ENCODE measurements at regions of chr11 and their contacts with region 1.

Region 1: GRCh38 chr11:71251761-71252443 is 475 bp downstream of the SHANK2 start:
- DNase-seq: peak; percentile 79
- H3K4me3 Mint-ChIP-seq: peak overlapping the region; percentile 87
- H3K27ac Mint-ChIP-seq: peak overlapping the region; percentile 67
- H3K4me1 Mint-ChIP-seq: peaks cover 46% of the 10 kb centered on the region
- H3K27me3 Mint-ChIP-seq: no peaks in the 10 kb centered on the region
- CTCF ChIP-seq: peak; percentile 77

Region 2: GRCh38 chr11:71188886-71189767 is 62.8 kb before region 1 on chr11:
- CTCF ChIA-PET with region 1: no interaction called
- intact Hi-C with region 1: no loop called
- DNase-seq: no peak
- H3K4me3 Mint-ChIP-seq: no peak overlapping the region
- H3K27ac Mint-ChIP-seq: no peak overlapping the region
- H3K4me1 Mint-ChIP-seq: no peaks in the 10 kb centered on the region
- H3K27me3 Mint-ChIP-seq: no peaks in the 10 kb centered on the region
- CTCF ChIP-seq: no peak

Region 3: DNA sequence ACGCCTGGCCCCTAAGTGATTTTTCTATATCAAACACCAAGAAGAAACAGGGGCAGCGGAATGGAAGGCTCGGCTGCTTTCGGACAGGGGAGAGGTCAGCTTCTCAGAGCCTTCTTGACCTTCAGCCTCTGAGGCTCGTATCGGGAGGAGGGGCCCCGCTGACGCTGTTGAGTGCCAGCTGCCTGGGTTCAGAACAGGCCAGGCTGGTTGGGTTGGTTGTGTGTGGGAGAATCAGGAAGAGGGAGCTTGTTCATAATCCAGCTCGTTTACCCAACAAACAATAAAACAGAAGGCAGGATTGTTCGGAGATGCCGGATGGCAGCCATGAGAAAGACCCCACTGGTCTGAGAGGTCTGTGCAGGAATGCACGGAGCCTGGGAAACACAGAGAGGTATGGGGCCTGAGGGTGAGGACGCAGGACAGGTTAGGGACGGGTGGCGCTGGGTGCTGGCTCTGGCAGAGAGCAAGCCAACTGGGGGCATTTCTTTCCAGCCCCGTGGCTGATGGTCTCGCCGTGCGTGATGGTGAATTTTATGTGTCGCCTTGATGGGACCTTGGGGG is 32.1 kb after region 1 on chr11:
- CTCF ChIA-PET with region 1: interaction called, 9 read pairs
- intact Hi-C with region 1: loop called (anchors 1 kb)
- DNase-seq: peak; percentile 95
- H3K4me3 Mint-ChIP-seq: peak overlapping the region; percentile 70
- H3K27ac Mint-ChIP-seq: peak overlapping the region; percentile 88
- H3K4me1 Mint-ChIP-seq: peaks cover 58% of the 10 kb centered on the region
- H3K27me3 Mint-ChIP-seq: no peaks in the 10 kb centered on the region
- CTCF ChIP-seq: no peak

Region 4: GRCh38 chr11:71298761-71299181 is 46.9 kb after region 1 on chr11:
- CTCF ChIA-PET with region 1: interaction called, 19 read pairs
- intact Hi-C with region 1: loop called (anchors 2 kb)
- DNase-seq: no peak
- H3K4me3 Mint-ChIP-seq: peak overlapping the region; percentile 61
- H3K27ac Mint-ChIP-seq: peak overlapping the region; percentile 98
- H3K4me1 Mint-ChIP-seq: peaks cover 50% of the 10 kb centered on the region
- H3K27me3 Mint-ChIP-seq: no peaks in the 10 kb centered on the region
- CTCF ChIP-seq: no peak

Region 5: DNA sequence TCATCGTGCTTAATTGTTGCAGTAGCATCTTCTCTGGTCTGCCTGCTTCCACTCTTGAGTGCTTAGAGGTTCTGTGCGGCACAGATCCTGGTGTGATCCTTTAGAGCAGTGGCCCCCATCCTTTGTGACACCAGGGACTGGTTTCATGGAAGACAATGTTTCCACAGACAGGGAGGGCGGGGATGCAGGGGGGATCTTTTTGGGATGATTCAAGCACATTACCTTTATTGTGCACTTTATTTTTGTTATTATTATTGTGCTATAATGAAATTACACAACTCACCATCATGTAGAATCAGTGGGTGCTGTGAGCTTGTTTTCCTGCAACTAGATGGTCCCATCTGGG is 77.2 kb after region 1 on chr11:
- CTCF ChIA-PET with region 1: interaction called, 24 read pairs
- intact Hi-C with region 1: no loop called
- DNase-seq: no peak
- H3K4me3 Mint-ChIP-seq: no peak overlapping the region
- H3K27ac Mint-ChIP-seq: no peak overlapping the region
- H3K4me1 Mint-ChIP-seq: no peaks in the 10 kb centered on the region
- H3K27me3 Mint-ChIP-seq: peaks cover 13% of the 10 kb centered on the region
- CTCF ChIP-seq: no peak

Region 6: DNA sequence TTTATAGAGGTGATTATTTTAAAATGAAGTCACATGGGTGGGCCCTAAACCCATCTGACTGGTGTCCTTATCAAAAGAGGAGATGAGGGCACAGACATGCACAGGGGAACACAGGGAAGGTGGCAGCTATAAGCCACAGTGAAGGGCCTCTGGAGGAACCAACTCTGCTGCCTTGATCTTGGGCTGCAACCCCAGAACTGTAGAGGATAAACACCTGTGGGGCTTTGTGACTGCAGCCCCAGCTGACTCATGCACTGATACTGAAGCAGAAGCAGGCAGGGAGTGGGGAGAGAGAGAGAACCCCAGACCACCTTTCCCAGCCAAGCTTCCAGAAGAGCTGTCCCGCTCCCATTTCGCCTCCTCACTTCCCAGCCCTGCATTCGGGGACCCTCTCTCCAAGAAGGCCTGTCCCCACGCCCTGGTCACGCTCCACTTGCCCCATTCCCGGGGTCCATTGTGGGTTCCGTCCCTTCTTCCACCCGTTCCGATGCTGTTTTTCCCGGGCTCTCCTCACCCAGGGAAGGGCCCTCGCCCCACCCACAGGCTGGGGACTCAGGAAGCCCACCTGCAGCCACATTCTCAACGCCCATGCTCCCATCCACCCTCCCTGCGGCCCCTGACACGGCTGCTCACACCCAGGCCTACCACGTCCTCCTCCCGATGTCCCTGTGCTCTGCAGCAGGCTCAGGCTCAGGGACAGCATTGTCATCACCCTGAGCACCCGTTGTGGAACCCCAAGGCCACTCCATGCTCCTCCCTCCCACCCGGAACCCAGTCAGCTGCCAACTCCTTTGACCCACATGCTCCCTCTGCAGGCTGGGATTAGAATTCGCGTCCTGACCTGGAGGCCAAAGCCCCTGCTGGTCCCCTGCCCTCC is 91.3 kb after region 1 on chr11:
- CTCF ChIA-PET with region 1: no interaction called
- intact Hi-C with region 1: loop called (anchors 5 kb)
- DNase-seq: peak; percentile 76
- H3K4me3 Mint-ChIP-seq: no peak overlapping the region
- H3K27ac Mint-ChIP-seq: no peak overlapping the region
- H3K4me1 Mint-ChIP-seq: no peaks in the 10 kb centered on the region
- H3K27me3 Mint-ChIP-seq: peaks cover 64% of the 10 kb centered on the region
- CTCF ChIP-seq: peak; percentile 84

Region 7: DNA sequence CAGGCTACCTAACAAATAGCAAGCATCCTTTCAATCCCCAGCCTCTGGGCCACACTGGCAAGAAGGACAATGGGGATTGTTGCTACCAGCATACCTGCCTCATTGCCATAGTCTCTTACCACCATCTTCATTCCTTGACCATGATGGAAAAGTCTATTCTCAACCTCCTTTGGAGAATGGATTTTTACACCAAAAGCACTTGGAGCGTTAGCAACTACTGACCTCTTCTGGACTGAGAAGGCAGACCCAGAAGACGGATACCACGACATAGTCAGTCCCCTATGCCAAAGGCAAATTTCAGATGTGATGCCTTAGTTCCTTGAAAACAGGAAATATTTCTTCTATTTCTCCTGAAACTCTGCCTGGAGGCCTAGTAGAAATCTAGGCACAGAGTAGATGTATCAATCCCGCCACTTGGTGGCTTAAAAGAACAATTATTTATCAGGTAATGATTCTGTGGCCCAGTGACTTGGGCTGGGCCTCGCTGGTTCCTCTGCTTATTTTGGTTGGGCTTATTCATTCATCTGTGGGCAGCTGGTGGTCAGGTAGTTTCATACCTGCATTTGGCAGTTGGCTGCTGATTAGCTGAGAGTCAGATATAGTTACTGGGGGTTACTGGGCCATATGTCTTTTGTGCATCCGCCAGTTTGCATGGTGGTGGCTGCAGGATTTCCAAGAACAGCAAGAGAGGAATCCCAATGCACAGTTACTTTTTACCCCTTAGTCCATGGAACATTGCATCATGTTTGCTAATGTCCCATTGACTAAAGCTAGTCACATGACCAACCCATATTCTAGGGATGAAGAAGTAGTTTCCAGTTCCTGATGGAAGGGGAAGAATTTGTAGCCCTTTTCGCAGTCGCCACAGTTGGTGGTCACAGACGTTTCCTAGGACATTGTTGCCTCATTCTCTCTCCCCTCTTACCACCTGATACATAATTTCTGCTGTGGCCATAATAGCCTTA is 121.1 kb after region 1 on chr11:
- CTCF ChIA-PET with region 1: no interaction called
- intact Hi-C with region 1: no loop called
- DNase-seq: peak; percentile 19
- H3K4me3 Mint-ChIP-seq: no peak overlapping the region
- H3K27ac Mint-ChIP-seq: no peak overlapping the region
- H3K4me1 Mint-ChIP-seq: no peaks in the 10 kb centered on the region
- H3K27me3 Mint-ChIP-seq: peaks cover 58% of the 10 kb centered on the region
- CTCF ChIP-seq: peak; percentile 23